IMR-90 (cell line): ENCODE measurements at regions of chr1 and their contacts with region 1.

Region 1: DNA sequence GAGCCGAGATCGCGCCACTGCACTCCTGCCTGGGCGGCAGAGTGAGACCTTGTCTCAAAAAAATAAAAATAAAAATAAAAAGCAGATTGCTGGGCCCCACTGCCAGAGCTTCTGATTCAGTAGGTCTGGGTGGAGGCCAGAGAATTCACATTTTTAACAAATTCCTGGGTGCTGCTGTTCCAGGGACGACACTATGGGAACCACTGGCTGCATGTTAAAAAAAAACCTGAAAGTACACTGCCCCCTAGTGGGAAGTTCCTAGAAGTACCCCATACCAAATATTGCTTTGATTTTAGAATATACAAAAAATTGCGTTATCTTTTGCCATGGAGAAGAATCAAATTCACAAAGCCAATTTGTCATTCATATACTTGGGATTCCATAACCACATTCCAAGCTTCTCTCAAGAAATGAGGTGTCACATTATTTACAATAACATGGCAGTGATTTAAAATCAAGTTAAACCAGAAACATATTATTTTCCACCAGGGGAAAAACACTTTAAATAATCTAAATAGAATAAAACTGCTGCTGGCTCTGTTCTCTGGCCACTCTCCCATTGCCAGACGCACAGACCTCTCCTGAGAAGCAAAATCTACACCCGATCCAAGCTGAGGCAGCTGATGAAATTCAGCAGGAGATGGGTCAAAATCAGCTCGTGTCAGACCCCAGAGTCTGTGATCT is 27.4 kb downstream of the SYF2 start:
- DNase-seq: peak; percentile 58
- ATAC-seq: peak; percentile 81
- H3K4me3 ChIP-seq: no peak overlapping the region
- H3K27ac ChIP-seq: no peak overlapping the region
- H3K4me1 ChIP-seq: no peaks in the 10 kb centered on the region
- H3K27me3 ChIP-seq: peaks cover 43% of the 10 kb centered on the region
- CTCF ChIP-seq: peak; percentile 77
- POLR2A ChIP-seq: no peak
- RAD21 ChIP-seq: peak; percentile 66

Region 2: GRCh38 chr1:24659993-24660665 is 544.8 kb before region 1 on chr1:
- CTCF ChIA-PET with region 1: no interaction called
- POLR2A ChIA-PET with region 1: no interaction called
- dilution Hi-C with region 1: loop called (anchors 25 kb)
- in situ Hi-C with region 1: loop called (anchors 10 kb)
- intact Hi-C with region 1: no loop called
- DNase-seq: no peak
- ATAC-seq: no peak
- H3K4me3 ChIP-seq: no peak overlapping the region
- H3K27ac ChIP-seq: no peak overlapping the region
- H3K4me1 ChIP-seq: no peaks in the 10 kb centered on the region; the same call in 1 of the 2 replicates
- H3K27me3 ChIP-seq: no peaks in the 10 kb centered on the region
- CTCF ChIP-seq: no peak
- POLR2A ChIP-seq: no peak
- RAD21 ChIP-seq: no peak

Region 3: DNA sequence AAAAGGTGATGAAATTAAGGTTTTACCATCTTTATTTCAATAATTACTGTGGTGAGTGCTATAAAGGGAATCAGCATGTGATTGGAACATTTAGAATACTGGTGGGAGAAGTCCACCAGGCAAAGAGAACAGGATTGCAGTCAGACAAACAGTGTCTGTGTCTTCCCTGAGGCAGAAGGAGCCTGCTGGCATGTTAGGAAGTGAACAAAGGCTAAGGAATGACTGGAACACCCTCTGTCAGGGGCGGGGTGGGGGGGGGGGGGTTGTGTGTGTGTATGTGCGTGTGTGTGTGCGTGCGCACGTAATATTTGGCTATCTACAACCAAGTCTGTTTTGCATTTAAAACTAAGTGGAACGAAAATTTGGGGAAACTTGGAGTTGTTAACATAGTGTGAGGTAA is 531.6 kb before region 1 on chr1:
- CTCF ChIA-PET with region 1: no interaction called
- POLR2A ChIA-PET with region 1: no interaction called
- dilution Hi-C with region 1: loop called (anchors 25 kb)
- in situ Hi-C with region 1: loop called (anchors 10 kb)
- intact Hi-C with region 1: no loop called
- DNase-seq: peak; percentile 34
- ATAC-seq: peak; percentile 40; the same call in 1 of the 2 replicates
- H3K4me3 ChIP-seq: no peak overlapping the region
- H3K27ac ChIP-seq: no peak overlapping the region
- H3K4me1 ChIP-seq: peaks cover 2% of the 10 kb centered on the region; the same call in 1 of the 2 replicates
- H3K27me3 ChIP-seq: no peaks in the 10 kb centered on the region
- CTCF ChIP-seq: no peak
- POLR2A ChIP-seq: no peak
- RAD21 ChIP-seq: no peak

Region 4: DNA sequence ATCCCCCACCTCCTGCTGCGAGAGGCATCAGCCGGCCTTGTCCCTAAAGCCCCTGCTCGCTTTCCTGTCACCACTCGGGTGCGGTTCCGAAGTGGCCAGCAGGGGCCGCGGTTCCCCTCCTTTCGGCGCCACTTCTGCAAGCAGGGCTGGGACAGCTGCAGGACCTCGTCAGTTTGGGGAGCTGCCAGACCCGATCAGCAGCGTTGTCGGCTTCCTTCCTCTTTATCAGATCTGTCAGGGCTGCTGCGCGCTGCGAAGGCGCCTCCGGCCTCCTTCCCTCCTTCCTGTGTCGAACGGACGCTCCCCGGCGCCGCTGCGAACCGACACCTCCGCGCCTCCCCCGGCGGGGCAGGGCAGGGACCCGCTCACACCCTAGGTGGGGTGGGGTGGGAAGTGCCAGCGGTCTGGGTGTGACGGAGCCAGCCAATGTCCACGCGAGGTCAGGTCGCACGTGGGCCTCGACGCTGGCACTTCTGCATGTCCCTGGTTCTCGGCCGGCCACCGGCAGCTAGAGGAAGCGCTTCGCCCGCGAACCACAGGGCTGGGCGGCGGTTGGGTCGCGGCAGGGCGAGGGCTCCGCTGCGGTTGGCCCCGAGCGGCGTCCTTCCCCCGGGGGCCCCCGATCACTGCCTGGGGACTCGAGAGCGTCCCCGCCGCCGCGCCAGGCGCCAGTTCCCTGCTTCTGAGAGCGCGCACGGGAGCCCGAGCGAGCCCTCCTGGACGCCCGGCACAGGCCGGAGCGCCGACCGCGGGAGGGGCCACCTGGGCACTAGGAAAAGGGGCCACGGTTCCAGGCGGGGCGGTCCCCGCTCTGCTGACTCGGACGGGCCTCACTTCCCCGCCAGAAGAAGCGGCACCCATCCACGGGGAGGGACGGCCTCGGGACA is 356.7 kb before region 1 on chr1:
- CTCF ChIA-PET with region 1: interaction called, 3 read pairs
- POLR2A ChIA-PET with region 1: no interaction called
- dilution Hi-C with region 1: no loop called
- in situ Hi-C with region 1: loop called (anchors 10 kb)
- intact Hi-C with region 1: loop called (anchors 1 kb)
- DNase-seq: peak; percentile 86
- ATAC-seq: peak; percentile 87
- H3K4me3 ChIP-seq: peak overlapping the region; percentile 28
- H3K27ac ChIP-seq: peak overlapping the region; percentile 12; the same call in 1 of the 2 replicates
- H3K4me1 ChIP-seq: peaks cover 8% of the 10 kb centered on the region; the same call in 1 of the 2 replicates
- H3K27me3 ChIP-seq: no peaks in the 10 kb centered on the region
- CTCF ChIP-seq: peak; percentile 80
- POLR2A ChIP-seq: peak; percentile 31; the same call in 1 of the 2 replicates
- RAD21 ChIP-seq: peak; percentile 76

Region 5: DNA sequence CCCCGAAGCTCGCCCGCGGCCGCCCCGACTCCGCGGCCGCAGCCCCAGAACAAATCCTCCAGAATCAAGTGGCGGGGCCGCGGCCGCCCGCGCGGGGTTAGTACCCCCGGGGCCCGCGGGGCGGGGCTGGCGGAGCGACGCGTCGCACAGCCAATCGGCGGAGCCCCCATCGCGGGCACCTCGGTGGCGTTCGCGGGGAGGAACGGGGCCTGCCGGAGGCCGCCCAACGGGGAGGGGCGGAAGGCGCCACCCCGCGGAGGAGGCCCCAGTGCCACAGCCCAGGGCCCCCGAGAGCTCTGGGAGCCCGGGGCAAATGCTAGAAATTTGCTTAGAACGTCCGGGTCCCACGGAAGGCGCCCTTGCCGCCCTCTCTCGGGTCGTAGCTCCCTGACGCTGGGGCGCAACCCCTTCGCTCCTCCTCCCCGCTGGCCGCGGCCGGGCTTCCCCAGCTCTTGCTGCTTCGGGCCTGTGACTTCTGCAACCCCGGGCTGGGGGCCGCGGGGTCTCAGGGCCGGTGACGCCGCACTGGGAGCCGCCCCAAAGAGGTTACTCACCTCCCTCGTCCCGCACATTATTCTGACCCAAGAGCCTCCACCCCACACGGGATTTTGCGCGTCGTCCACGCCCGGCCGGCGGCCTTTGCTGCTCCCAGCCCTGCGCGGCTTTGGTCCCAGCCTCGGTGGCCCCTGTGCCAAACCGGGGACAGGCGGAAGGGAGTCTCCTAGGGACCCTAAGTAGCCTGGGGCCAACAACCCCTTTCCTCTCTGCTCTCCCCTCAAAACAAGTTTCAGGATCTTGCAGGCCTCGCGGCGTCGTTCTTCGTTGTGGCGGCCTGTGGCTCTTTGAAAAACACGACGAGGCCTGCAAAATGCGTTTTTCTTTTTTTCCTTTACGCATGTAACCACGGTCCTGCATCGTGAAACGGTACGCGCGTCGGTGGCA is 274.5 kb before region 1 on chr1 and contains the start of gene RUNX3:
- CTCF ChIA-PET with region 1: no interaction called
- POLR2A ChIA-PET with region 1: no interaction called
- dilution Hi-C with region 1: no loop called
- in situ Hi-C with region 1: loop called (anchors 10 kb)
- intact Hi-C with region 1: loop called (anchors 2 kb)
- DNase-seq: no peak
- ATAC-seq: 0 out of 2 replicates have a peak, but pooled peaks have one; percentile 24
- H3K4me3 ChIP-seq: peak within 1 kb of the TSS; percentile 31; the same call in 1 of the 2 replicates
- H3K27ac ChIP-seq: no peak within 1 kb of the TSS
- H3K4me1 ChIP-seq: peaks cover 2% of the 10 kb centered on the region; the same call in 1 of the 2 replicates
- H3K27me3 ChIP-seq: peaks cover 92% of the 10 kb centered on the region
- CTCF ChIP-seq: no peak
- POLR2A ChIP-seq: no peak
- RAD21 ChIP-seq: no peak
- total RNA-seq, gene RUNX3: not detected in 2 replicates

Region 6: GRCh38 chr1:25037174-25038074 is 167.5 kb before region 1 on chr1:
- CTCF ChIA-PET with region 1: interaction called, 6 read pairs
- POLR2A ChIA-PET with region 1: no interaction called
- dilution Hi-C with region 1: no loop called
- in situ Hi-C with region 1: no loop called
- intact Hi-C with region 1: loop called (anchors 1 kb)
- DNase-seq: peak; percentile 13
- ATAC-seq: peak; percentile 87
- H3K4me3 ChIP-seq: no peak overlapping the region
- H3K27ac ChIP-seq: no peak overlapping the region
- H3K4me1 ChIP-seq: no peaks in the 10 kb centered on the region
- H3K27me3 ChIP-seq: peaks cover 25% of the 10 kb centered on the region
- CTCF ChIP-seq: peak; percentile 58
- POLR2A ChIP-seq: no peak
- RAD21 ChIP-seq: peak; percentile 58